WTC11 (cell line): ENCODE measurements at regions of chr1 and their contacts with region 1.

Region 1: DNA sequence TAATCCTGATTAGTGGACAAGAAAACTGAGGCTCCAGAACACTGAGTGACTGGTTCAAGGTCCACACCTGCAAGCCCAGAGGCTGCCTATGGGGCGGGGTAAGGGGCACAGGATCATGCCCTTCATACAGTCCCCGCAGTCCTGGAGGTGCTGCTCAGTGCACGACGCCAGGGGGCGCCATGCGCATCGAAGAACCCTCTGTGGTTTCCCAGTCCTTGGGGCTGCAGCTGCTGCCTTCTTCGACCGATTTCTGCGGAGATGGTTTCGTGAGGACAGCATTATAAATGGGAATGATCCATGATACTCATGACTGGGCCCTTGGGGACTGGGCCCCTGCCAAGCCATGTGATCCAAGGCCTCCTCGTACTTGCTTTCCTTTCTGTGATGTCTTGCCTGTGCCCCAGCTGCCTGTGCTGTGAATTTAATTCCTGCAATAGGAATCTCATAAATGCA is 37.1 kb upstream of the ARHGEF10L start:
- DNase-seq: peak; percentile 97
- ATAC-seq: peak; percentile 99
- H3K4me3 Mint-ChIP-seq: no peak overlapping the region
- H3K27ac Mint-ChIP-seq: no peak overlapping the region
- H3K4me1 Mint-ChIP-seq: peaks cover 7% of the 10 kb centered on the region; the same call in 1 of the 2 replicates
- H3K27me3 Mint-ChIP-seq: 0 out of 2 replicates have a peak, but pooled peaks cover 4% of the 10 kb centered on the region
- CTCF ChIP-seq: peak; percentile 97

Region 2: GRCh38 chr1:17513131-17513530 is 10.8 kb after region 1 on chr1:
- CTCF ChIA-PET with region 1: interaction called, 11 read pairs
- POLR2A ChIA-PET with region 1: no interaction called
- DNase-seq: no peak
- ATAC-seq: no peak
- H3K4me3 Mint-ChIP-seq: no peak overlapping the region
- H3K27ac Mint-ChIP-seq: no peak overlapping the region
- H3K4me1 Mint-ChIP-seq: peaks cover 17% of the 10 kb centered on the region
- H3K27me3 Mint-ChIP-seq: peaks cover 2% of the 10 kb centered on the region; the same call in 1 of the 2 replicates
- CTCF ChIP-seq: no peak

Region 3: DNA sequence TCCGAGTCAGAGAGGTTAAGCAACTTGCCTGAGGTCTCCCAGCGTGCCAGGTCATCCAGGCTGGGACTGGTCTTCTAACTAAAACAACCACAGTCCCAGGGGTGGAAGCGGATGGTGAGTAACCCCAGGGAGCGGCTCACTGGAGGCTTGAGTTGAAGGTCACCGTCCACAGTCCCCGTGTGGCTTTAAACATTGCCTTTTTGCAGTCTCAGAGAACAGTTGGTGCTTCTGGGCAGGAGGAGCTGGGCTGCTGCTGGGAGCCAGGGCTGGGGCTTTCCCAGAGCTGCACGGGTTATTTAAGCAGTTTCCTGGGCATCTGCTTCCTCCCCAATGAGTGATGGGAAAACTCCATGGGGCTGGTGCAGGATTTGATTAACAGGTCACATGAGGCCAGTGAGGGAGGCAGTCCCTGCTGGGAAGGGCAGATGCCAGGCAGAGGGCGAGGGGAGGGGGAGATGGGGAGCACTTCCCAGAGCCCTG is 49.4 kb after region 1 on chr1:
- CTCF ChIA-PET with region 1: interaction called, 17 read pairs
- POLR2A ChIA-PET with region 1: interaction called, 3 read pairs
- DNase-seq: no peak
- ATAC-seq: peak; percentile 4
- H3K4me3 Mint-ChIP-seq: peak overlapping the region; percentile 16; the same call in 1 of the 2 replicates
- H3K27ac Mint-ChIP-seq: peak overlapping the region; percentile 94
- H3K4me1 Mint-ChIP-seq: peaks cover 90% of the 10 kb centered on the region
- H3K27me3 Mint-ChIP-seq: no peaks in the 10 kb centered on the region
- CTCF ChIP-seq: no peak

Region 4: GRCh38 chr1:17569200-17570161 is 67.1 kb after region 1 on chr1:
- CTCF ChIA-PET with region 1: interaction called, 114 read pairs
- POLR2A ChIA-PET with region 1: interaction called, 4 read pairs
- DNase-seq: no peak
- ATAC-seq: no peak
- H3K4me3 Mint-ChIP-seq: no peak overlapping the region
- H3K27ac Mint-ChIP-seq: peak overlapping the region; percentile 89
- H3K4me1 Mint-ChIP-seq: peaks cover 88% of the 10 kb centered on the region
- H3K27me3 Mint-ChIP-seq: no peaks in the 10 kb centered on the region
- CTCF ChIP-seq: no peak

Region 5: DNA sequence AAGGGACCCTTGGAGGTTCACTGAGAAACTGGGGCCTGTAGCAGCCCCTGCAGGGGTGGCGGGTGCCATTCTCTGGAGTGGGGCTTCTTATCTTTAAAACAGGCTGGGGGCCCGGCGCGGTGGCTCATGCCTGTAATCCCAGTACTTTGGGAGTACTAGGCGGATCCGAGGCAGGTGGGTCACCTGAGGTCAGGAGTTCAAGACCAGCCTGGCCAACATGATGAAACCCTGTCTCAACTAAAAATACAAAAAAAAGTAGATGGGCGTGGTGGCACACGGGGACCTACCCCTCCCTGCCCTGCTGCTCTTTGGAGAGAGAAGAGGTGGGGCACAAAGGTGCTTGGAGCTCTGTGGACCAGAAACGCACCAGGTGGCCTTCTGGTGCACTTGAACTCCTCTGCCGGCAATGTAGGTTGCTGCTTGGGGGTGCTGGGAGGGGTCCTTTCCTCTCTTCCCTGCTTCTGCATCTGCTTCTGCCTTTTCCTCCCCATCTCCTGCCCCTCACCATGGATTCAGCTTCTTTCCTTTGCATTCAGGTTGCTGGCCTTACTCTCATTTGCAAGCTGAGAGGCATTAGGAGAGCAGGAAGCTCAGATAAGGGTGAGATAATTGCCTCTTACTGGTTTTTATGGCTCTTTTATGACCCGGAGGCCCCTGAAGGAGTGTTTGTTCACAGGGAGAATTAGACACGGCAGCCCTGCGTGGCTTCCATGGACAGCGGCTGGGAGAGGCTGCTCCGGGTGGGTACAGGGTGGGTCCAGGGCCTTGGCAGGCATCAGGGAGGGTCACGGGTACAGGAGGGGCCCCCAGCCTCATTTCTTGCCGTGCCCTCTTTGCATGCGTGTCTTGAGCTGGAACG is 94.5 kb after region 1 on chr1:
- CTCF ChIA-PET with region 1: interaction called, 273 read pairs
- POLR2A ChIA-PET with region 1: no interaction called
- DNase-seq: no peak
- ATAC-seq: no peak
- H3K4me3 Mint-ChIP-seq: no peak overlapping the region
- H3K27ac Mint-ChIP-seq: peak overlapping the region; percentile 71; the same call in 1 of the 2 replicates
- H3K4me1 Mint-ChIP-seq: peaks cover 20% of the 10 kb centered on the region
- H3K27me3 Mint-ChIP-seq: no peaks in the 10 kb centered on the region
- CTCF ChIP-seq: no peak